Esophagus squamous epithelium (tissue), 5 donors: ENCODE measurements at regions of chr5 and their contacts with region 1.

Region 1: GRCh38 chr5:52915176-52915875 is 73.8 kb upstream of the ITGA2 start:
- DNase-seq: no peak
- H3K4me3 ChIP-seq: peak overlapping the region in 2 of 4 donors; percentile 13 to 49
- H3K27ac ChIP-seq: peak overlapping the region in 2 of 4 donors; percentile 29 to 46
- H3K4me1 ChIP-seq: peaks cover 0 to 15% (median 3%) of the 10 kb centered on the region in 3 donors
- H3K27me3 ChIP-seq: no peaks in the 10 kb centered on the region
- CTCF ChIP-seq: peak in 5 of 6 experiments; percentile 68 to 76 (median 71)
- POLR2A ChIP-seq: no peak

Region 2: DNA sequence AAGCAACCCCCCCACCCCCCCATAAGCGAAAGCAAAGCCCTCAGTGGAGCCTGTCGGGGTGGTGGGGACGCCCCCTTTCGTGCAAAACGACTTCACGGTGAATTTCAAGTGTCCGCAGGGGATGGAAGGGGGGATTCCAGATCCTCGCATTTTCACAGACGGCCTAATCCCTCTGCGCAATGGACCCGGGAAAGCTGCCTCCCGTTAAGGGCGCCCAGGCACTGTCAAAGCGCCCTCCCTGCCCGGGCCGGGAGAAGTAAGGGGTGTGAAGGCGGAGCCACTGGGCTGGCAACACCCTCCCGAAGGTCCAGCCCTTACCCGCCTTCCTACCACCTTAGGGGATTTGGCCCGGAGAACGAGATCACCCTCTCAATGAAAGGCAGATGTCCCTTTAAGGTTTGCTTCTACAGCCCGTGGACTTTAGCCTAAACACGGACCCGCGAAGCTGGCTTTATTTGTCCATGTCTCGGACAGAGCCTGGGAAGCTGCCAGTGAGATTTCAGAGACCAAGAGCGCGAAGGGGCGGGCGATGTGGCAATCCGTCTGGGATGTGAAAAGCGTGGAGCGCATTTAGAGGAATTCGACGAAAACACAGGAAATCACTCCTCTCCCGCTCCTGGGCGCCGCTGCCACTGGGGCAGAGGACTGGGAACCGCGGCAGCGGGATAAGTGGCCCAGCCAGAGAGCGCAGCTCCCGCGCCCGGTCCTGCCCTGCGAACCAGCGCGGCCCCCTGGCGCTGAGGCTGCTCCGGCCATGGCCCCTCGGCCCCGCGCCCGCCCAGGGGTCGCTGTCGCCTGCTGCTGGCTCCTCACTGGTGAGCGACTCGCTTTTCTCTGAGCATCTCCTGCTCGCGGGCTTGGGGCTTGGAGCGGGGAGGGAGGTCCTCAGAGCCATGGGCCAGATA is 127.5 kb before region 1 on chr5 and contains the starts of genes ITGA1 and PELO:
- intact Hi-C with region 1: loop called (anchors 10 kb)
- DNase-seq: no peak
- H3K4me3 ChIP-seq: peak within 1 kb of the TSS; percentile 44 to 81 (median 64)
- H3K27ac ChIP-seq: peak within 1 kb of the TSS; percentile 79 to 96 (median 90)
- H3K4me1 ChIP-seq: peaks cover 8 to 40% (median 10%) of the 10 kb centered on the region in 3 donors
- H3K27me3 ChIP-seq: peaks cover 0 to 23% (median 0%) of the 10 kb centered on the region in 4 donors
- CTCF ChIP-seq: peak in 3 of 6 experiments; percentile 10 to 39 (median 16)
- POLR2A ChIP-seq: peak in 2 of 4 donors; percentile 54 to 85
- total RNA-seq, gene ITGA1: 9.3 to 88.9 (median 17.6) TPM
- total RNA-seq, gene PELO: 10.4 to 25.6 (median 14.6) TPM